Colonic mucosa (tissue), 4 donors: ENCODE measurements at regions of chr16 and their contacts with region 1.

Region 1: GRCh38 chr16:67183627-67184328 is at the start of gene MATCAP1:
- DNase-seq: peak; percentile 97
- H3K4me3 ChIP-seq: peak within 1 kb of the TSS; percentile 67
- H3K27ac ChIP-seq: peak within 1 kb of the TSS; percentile 92
- H3K4me1 ChIP-seq: peaks cover 14% of the 10 kb centered on the region
- H3K27me3 ChIP-seq: no peaks in the 10 kb centered on the region
- CTCF ChIP-seq: no peak
- total RNA-seq, gene MATCAP1: 24.0 to 43.0 TPM

Region 2: GRCh38 chr16:66977341-66978113 is 206.3 kb before region 1 on chr16:
- intact Hi-C with region 1: loop called (anchors 10 kb)
- DNase-seq: peak; percentile 93
- H3K4me3 ChIP-seq: no peak overlapping the region
- H3K27ac ChIP-seq: no peak overlapping the region
- H3K4me1 ChIP-seq: no peaks in the 10 kb centered on the region
- H3K27me3 ChIP-seq: no peaks in the 10 kb centered on the region
- CTCF ChIP-seq: peak; percentile 93

Region 3: DNA sequence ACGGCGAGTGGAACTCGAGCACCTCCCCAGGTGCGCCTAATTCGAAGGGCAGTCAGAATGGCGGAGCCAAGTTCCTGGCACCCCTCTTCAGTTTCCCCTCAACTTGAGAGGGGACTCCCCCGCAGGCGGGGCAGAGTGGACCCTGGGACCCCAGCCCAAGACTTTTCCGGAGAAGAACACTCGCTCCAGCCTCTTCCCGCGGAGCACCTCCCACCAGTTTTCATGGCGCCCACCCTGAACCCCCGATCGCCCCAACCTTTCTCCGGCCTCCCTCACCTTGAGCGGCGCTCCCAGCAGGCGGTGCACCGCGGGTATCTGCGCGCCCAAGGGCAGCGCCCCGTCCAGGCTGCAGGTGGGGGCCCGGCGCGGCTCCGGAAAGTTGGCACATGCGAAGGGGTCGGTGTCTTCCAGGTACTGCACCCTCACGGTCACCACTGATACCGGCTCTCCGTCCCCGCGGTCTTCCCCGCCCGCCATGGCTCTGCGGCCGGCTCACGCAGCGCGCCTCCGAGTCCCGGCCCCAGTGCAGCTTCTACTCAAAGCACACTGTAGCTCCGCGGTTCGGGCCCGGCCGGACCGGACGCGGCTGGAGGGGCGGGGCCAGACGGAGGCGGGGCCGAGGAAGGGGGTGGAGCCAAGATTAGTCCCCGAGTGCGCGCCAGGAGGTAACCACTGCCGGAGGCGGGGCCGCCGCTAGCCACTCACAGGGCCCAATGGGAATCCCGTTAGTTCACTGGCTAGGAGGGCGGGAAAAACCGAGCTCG is 63.3 kb after region 1 on chr16 and contains the start of gene FHOD1:
- intact Hi-C with region 1: no loop called
- DNase-seq: peak; percentile 99
- H3K4me3 ChIP-seq: peak within 1 kb of the TSS; percentile 59
- H3K27ac ChIP-seq: peak within 1 kb of the TSS; percentile 77
- H3K4me1 ChIP-seq: peaks cover 14% of the 10 kb centered on the region
- H3K27me3 ChIP-seq: no peaks in the 10 kb centered on the region
- CTCF ChIP-seq: no peak
- total RNA-seq, gene FHOD1: 21.6 to 47.2 TPM